ENCODE measurements at regions of chr5 and their contacts with region 1.

Region 1: GRCh38 chr5:43227655-43228054 is 35.6 kb downstream of the NIM1K start:
- DNase-seq: peak; percentile 46
- ATAC-seq: peak; percentile 41; the same call in 1 of the 3 replicates
- H3K4me3 ChIP-seq: no peak overlapping the region
- H3K27ac ChIP-seq: no peak overlapping the region
- H3K4me1 ChIP-seq: no peaks in the 10 kb centered on the region
- H3K27me3 ChIP-seq: no peaks in the 10 kb centered on the region; a peak in 1 of 5 replicates
- CTCF ChIP-seq: peak; percentile 44
- EP300 ChIP-seq: no peak
- POLR2A ChIP-seq: no peak
- RAD21 ChIP-seq: no peak

Region 2: DNA sequence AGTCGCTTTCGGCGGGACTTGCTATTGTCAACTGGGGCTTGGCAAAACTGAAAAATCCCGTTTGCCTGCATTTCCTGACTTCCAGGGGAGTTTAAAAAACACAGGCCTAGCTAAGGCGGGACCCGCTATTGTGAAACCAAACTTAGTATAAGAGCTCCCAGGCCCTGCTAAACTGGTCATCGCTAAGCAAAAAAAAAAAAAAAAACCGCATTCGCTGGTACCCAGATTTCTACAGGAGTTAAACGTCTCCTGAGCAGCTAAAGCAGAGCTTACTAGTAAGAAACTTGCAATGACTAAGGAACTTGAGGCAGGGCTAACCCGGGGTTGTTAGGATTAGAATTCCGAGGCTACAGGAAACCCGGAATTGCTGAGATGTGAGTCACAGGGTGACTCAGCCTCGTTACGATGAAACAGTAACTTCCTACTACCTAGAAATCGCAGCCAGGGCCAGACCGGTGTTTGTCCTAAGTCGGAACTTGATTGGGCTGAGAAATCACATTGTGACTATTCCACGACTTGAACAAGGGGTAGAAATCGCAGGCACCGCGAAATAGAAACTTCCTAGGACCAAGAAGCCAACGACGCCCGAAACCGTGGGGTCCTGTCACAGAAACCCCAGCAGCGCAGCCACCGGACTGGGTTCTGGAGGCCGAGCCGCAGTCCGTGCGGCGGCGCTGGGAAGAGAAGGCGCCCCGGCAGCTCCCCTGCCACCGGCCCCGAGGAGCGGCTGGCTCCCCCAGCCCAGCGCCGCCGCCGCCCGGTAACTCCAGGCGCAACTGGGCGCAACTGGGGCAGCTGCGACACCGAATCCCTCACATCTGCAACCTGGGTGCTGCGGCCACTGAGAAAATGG is 277.0 kb before region 1 on chr5:
- CTCF ChIA-PET with region 1: no interaction called
- POLR2A ChIA-PET with region 1: no interaction called
- in situ Hi-C with region 1: no loop called
- intact Hi-C with region 1: no loop called
- DNase-seq: no peak
- ATAC-seq: no peak
- H3K4me3 ChIP-seq: no peak overlapping the region
- H3K27ac ChIP-seq: no peak overlapping the region
- H3K4me1 ChIP-seq: no peaks in the 10 kb centered on the region
- H3K27me3 ChIP-seq: peaks cover 3 to 7% of the 10 kb centered on the region in 2 experiments; a peak in 3 of 5 replicates
- CTCF ChIP-seq: no peak
- EP300 ChIP-seq: no peak
- POLR2A ChIP-seq: no peak
- RAD21 ChIP-seq: no peak

Region 3: GRCh38 chr5:43066799-43067741 is 160.6 kb before region 1 on chr5:
- CTCF ChIA-PET with region 1: no interaction called
- POLR2A ChIA-PET with region 1: no interaction called
- in situ Hi-C with region 1: no loop called
- intact Hi-C with region 1: no loop called
- DNase-seq: peak; percentile 87
- ATAC-seq: peak; percentile 83
- H3K4me3 ChIP-seq: peak overlapping the region; percentile 82 to 92 (median 83)
- H3K27ac ChIP-seq: peak overlapping the region; percentile 98
- H3K4me1 ChIP-seq: peaks cover 35% of the 10 kb centered on the region
- H3K27me3 ChIP-seq: no peaks in the 10 kb centered on the region; a peak in 1 of 5 replicates
- CTCF ChIP-seq: peak; percentile 21; the same call in 1 of the 2 replicates
- EP300 ChIP-seq: peak; percentile 38 to 84; a peak in 3 of 4 replicates
- POLR2A ChIP-seq: peak; percentile 15 to 35; a peak in 3 of 4 replicates
- RAD21 ChIP-seq: no peak

Region 4: DNA sequence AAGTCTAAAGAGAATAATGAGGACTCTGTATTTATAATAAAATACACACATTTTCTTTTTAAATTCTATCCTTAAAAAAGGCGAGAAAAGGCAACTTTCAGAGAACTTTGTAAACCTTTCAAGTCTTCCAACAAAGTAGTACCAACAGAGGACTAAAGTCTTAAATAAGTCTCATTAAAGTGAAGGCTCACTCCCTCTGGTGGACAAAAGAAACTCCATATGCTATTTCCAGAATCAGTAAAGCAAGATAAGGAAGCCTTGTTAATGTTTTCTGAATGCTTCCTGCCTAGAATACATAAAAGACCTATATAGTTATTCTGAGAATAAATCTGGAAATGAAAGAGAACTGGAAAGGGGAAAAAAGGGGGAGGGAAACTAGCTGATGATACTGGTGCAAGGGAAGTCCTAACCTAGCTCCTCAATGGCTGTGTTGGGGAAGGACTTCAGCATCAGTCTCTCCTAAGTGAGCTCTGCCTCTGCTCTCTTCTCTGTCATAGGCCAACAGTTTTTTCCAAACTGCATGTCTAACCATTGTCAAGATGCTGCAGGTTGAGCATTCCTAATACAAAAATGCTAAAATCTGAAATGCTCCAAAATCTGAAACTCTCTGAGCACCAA is 78.4 kb after region 1 on chr5:
- CTCF ChIA-PET with region 1: no interaction called
- POLR2A ChIA-PET with region 1: no interaction called
- in situ Hi-C with region 1: no loop called
- intact Hi-C with region 1: loop called (anchors 2 kb)
- DNase-seq: peak; percentile 70
- ATAC-seq: peak; percentile 63
- H3K4me3 ChIP-seq: no peak overlapping the region; a peak in 2 of 6 replicates
- H3K27ac ChIP-seq: no peak overlapping the region
- H3K4me1 ChIP-seq: peaks cover 84% of the 10 kb centered on the region
- H3K27me3 ChIP-seq: no peaks in the 10 kb centered on the region
- CTCF ChIP-seq: peak; percentile 46
- EP300 ChIP-seq: no peak
- POLR2A ChIP-seq: peak in 1 of 2 experiments; percentile 45; a peak in 1 of 4 replicates
- RAD21 ChIP-seq: no peak

Region 5: GRCh38 chr5:43389679-43390329 is 162.1 kb after region 1 on chr5:
- CTCF ChIA-PET with region 1: interaction called, 23 read pairs
- POLR2A ChIA-PET with region 1: no interaction called
- in situ Hi-C with region 1: loop called (anchors 5 kb)
- intact Hi-C with region 1: loop called (anchors 1 kb)
- DNase-seq: peak; percentile 87
- ATAC-seq: peak; percentile 98
- H3K4me3 ChIP-seq: no peak overlapping the region
- H3K27ac ChIP-seq: no peak overlapping the region
- H3K4me1 ChIP-seq: no peaks in the 10 kb centered on the region
- H3K27me3 ChIP-seq: no peaks in the 10 kb centered on the region
- CTCF ChIP-seq: peak; percentile 87
- EP300 ChIP-seq: no peak
- POLR2A ChIP-seq: no peak
- RAD21 ChIP-seq: peak; percentile 88

Region 6: GRCh38 chr5:43699910-43700309 is 472.3 kb after region 1 on chr5:
- CTCF ChIA-PET with region 1: no interaction called
- POLR2A ChIA-PET with region 1: no interaction called
- in situ Hi-C with region 1: no loop called
- intact Hi-C with region 1: no loop called
- DNase-seq: no peak
- ATAC-seq: no peak
- H3K4me3 ChIP-seq: no peak overlapping the region
- H3K27ac ChIP-seq: no peak overlapping the region
- H3K4me1 ChIP-seq: no peaks in the 10 kb centered on the region
- H3K27me3 ChIP-seq: no peaks in the 10 kb centered on the region
- CTCF ChIP-seq: no peak
- EP300 ChIP-seq: no peak
- POLR2A ChIP-seq: no peak
- RAD21 ChIP-seq: no peak

Region 7: DNA sequence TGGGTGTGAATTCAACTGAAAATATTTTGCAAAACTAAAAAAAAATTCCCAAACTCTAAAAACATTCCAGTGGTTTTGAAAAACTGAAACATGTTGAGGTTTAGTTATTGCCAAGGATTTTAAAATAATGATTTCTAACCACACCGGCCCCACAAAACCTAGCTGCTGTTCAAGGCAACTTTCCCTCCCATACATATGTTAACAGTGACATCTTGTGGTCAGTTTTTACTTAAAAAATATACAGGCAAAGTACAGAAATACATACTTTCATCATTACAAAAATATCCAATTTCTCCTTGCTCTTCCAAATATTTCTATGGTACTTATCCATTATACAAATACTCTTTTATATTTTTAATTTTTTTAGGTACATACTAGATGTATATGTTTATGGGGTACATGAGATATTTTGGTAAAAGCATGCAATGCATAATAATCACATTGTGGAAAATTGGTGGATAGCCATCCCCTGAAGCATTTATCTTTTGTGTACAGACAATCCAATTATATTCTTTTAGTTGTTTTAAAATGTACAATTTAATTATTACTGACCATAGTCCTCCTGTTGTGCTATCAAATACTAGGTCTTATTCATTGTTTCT is 1546.7 kb after region 1 on chr5:
- CTCF ChIA-PET with region 1: no interaction called
- POLR2A ChIA-PET with region 1: no interaction called
- in situ Hi-C with region 1: no loop called
- intact Hi-C with region 1: loop called (anchors 5 kb)
- DNase-seq: peak; percentile 34
- ATAC-seq: peak; percentile 48; the same call in 1 of the 3 replicates
- H3K4me3 ChIP-seq: no peak overlapping the region
- H3K27ac ChIP-seq: no peak overlapping the region
- H3K4me1 ChIP-seq: no peaks in the 10 kb centered on the region
- H3K27me3 ChIP-seq: no peaks in the 10 kb centered on the region; a peak in 1 of 5 replicates
- CTCF ChIP-seq: peak; percentile 61
- EP300 ChIP-seq: no peak
- POLR2A ChIP-seq: no peak
- RAD21 ChIP-seq: peak; percentile 29; the same call in 1 of the 2 replicates